ENCODE measurements at regions of chr3 and their contacts with region 1.

Region 1: DNA sequence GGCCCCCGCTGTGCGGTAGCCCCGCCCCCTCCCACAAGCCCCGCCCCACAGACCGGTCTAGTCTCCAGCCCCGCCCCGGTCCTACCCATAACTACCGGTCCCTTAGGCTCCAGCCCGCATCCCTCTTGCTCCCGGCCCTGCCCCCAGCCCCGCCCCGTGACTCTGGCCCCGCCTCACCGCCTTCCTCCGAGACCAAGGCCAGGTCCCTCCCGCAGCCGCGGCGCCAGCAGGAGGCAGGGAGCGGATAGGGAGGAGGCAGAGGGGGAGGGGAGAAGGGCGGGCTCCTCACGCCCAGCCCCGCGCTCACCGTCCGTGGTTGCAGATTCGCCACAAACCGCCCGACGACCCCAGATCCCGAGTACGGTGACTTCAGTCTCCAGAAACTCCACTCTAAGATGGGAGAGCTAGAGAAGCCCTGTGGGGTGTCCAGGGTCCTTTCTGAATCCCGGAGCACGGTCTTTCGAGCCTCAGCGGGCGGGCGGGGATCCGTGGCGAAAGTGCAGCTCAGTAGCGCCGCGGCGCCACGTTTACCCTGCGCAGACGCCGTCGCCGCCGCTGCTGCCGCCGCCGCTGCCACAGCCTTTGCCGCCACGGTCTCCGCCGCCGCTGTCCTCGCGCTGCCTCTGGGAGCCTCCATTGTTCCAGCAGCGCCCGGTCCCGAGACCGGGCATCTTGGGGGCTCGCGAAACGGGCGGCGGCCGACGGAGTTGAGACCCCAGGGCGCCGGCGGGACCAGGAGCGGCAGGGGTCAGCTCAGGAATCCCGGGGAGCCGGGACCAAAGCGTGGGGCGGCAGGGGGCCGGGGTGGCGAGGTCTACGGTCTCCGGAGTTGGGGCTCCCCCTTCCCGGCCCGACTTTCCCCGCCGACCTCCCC is at the start of gene BRPF1:
- DNase-seq: peak; percentile 99 to 100 (median 100)
- H3K4me3 ChIP-seq: peak within 1 kb of the TSS; percentile 94
- H3K27ac ChIP-seq: peak within 1 kb of the TSS; percentile 91 to 98
- H3K4me1 ChIP-seq: peaks cover 4% of the 10 kb centered on the region
- H3K27me3 ChIP-seq: no peaks in the 10 kb centered on the region
- CTCF ChIP-seq: peak in 1 of 3 donors; percentile 41
- EP300 ChIP-seq: no peak
- POLR2A ChIP-seq: peak; percentile 51
- total RNA-seq, gene BRPF1: 11.7 to 26.4 (median 23.1) TPM

Region 2: GRCh38 chr3:9749645-9750555 is 18.5 kb after region 1 on chr3 and contains the start of gene OGG1:
- intact Hi-C with region 1: loop called in 1 of 4 experiments (anchors 2 kb)
- DNase-seq: peak; percentile 98 to 99 (median 98)
- H3K4me3 ChIP-seq: peak within 1 kb of the TSS; percentile 54
- H3K27ac ChIP-seq: peak within 1 kb of the TSS; percentile 35 to 83
- H3K4me1 ChIP-seq: peaks cover 10% of the 10 kb centered on the region
- H3K27me3 ChIP-seq: no peaks in the 10 kb centered on the region
- CTCF ChIP-seq: no peak
- EP300 ChIP-seq: no peak
- POLR2A ChIP-seq: peak; percentile 16
- total RNA-seq, gene OGG1: 16.8 to 54.3 (median 31.5) TPM

Region 3: DNA sequence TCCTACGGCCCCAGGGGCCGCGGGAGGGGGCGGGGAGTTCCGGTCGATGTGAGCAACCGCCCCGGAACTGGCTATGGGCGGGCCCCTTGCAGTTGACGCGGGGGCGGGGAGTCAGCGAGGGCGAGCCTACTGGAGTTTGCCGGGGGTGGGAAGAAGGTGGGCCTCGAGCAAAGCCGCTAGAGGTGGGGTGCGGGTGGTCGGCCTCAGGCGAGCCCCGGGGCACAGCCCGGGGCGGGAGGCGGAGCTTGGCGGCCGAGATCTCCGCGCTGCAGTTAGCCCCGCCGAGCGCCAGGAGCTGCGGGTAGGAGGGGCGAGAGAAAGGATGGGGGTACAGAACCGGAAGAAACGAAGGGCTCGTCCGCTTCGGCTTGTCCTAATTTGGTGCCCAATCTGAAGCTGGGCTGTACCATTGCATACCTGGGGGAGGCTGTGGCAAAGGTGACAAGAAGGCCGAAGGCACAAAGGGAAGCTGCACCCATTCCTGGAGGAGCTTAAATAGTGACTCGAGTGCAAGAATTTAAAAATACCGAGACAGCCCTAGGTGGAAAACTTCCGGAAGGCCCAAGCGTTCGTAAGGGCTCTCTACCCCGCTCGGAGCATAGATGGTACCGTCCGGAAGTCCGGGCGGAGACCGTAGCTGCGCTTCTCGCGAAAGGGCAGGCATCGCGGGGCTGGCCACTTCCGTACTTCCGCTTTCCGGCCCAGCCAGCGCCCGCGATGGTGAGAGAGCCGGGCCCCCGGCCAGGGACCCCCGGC is 61.1 kb after region 1 on chr3 and contains the starts of genes ARPC4 and TADA3:
- intact Hi-C with region 1: loop called in 1 of 4 experiments (anchors 10 kb)
- DNase-seq: peak; percentile 92 to 95 (median 94)
- H3K4me3 ChIP-seq: peak within 1 kb of the TSS; percentile 58
- H3K27ac ChIP-seq: peak within 1 kb of the TSS; percentile 68 to 96
- H3K4me1 ChIP-seq: peaks cover 9% of the 10 kb centered on the region
- H3K27me3 ChIP-seq: no peaks in the 10 kb centered on the region
- CTCF ChIP-seq: peak in 2 of 3 donors; percentile 41 to 62
- EP300 ChIP-seq: no peak
- POLR2A ChIP-seq: peak; percentile 63
- total RNA-seq, gene ARPC4: 58.3 to 123 (median 85.1) TPM
- total RNA-seq, gene TADA3: 49.4 to 77.9 (median 67.4) TPM

Region 4: DNA sequence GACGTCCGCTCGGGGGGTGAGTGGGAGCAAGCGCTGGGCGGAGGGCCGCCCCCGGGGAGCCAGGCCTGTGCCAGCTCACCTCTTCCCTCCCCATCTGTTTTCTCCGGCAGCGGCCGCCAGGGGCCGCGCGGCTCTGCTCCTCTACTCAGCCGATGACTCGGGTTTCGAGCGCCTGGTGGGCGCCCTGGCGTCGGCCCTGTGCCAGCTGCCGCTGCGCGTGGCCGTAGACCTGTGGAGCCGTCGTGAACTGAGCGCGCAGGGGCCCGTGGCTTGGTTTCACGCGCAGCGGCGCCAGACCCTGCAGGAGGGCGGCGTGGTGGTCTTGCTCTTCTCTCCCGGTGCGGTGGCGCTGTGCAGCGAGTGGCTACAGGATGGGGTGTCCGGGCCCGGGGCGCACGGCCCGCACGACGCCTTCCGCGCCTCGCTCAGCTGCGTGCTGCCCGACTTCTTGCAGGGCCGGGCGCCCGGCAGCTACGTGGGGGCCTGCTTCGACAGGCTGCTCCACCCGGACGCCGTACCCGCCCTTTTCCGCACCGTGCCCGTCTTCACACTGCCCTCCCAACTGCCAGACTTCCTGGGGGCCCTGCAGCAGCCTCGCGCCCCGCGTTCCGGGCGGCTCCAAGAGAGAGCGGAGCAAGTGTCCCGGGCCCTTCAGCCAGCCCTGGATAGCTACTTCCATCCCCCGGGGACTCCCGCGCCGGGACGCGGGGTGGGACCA is 201.6 kb after region 1 on chr3:
- intact Hi-C with region 1: loop called in 1 of 4 experiments (anchors 10 kb)
- DNase-seq: peak; percentile 64 to 90 (median 78)
- H3K4me3 ChIP-seq: peak overlapping the region; percentile 51
- H3K27ac ChIP-seq: peak overlapping the region; percentile 77 to 87
- H3K4me1 ChIP-seq: peaks cover 12% of the 10 kb centered on the region
- H3K27me3 ChIP-seq: no peaks in the 10 kb centered on the region
- CTCF ChIP-seq: peak in 2 of 3 donors; percentile 83 to 90
- EP300 ChIP-seq: no peak
- POLR2A ChIP-seq: no peak